Sciatic nerve (tissue), 2 donors: ENCODE measurements at regions of chr9 and their contacts with region 1.

Region 1: DNA sequence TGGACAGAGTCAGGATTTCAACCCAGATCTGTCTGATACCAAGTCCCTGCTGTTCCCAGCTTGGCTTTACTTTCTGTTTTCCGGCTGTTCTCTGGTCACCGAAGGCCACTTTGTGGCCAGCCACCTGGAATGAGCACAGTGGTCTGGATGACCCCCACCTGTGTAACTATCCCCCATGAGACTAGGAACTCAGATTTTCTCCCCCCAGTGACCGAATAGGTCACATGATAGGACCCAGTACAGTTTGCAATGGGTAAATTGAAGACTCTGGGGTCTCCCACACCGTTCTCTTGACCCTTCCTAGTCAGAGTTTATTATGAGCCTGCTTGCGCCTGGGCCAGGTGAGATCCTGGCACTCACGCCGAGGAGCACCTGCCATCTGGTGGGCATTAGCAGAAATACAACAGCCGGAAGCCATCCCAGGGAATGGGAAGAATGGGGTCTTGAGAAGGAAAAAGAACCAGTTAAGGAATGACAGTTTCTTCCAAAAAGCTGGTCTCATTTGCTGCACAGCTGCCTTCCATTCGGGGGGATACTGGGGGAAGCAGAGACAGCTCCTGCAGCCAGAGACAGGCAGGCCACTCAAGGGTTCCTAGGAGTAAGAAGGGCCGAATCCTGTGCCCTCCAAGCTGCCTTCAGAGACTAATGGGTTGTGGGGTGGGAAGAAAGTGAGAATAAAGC is 7.1 kb downstream of the PHYHD1 start:
- DNase-seq: no peak
- ATAC-seq: peak; percentile 81

Region 2: GRCh38 chr9:128322404-128323211 is 605.3 kb before region 1 on chr9 and contains the starts of genes COQ4 and TRUB2:
- intact Hi-C with region 1: no loop called
- DNase-seq: peak; percentile 95
- ATAC-seq: peak; percentile 99
- total RNA-seq, gene COQ4: 28.9 TPM
- total RNA-seq, gene TRUB2: 13.0 TPM

Region 3: GRCh38 chr9:128863647-128864046 is 64.2 kb before region 1 on chr9:
- intact Hi-C with region 1: loop called (anchors 5 kb)
- DNase-seq: peak; percentile 87
- ATAC-seq: peak; percentile 79